HepG2 (cell line): ENCODE measurements at regions of chrX and their contacts with region 1.

Region 1: GRCh38 chrX:19334945-19335626 is 8.6 kb upstream of the PDHA1 start:
- DNase-seq: peak; percentile 75
- ATAC-seq: peak; percentile 66
- H3K4me3 ChIP-seq: no peak overlapping the region
- H3K27ac ChIP-seq: no peak overlapping the region
- H3K4me1 ChIP-seq: no peaks in the 10 kb centered on the region
- H3K27me3 ChIP-seq: no peaks in the 10 kb centered on the region; a peak in 1 of 5 replicates
- CTCF ChIP-seq: peak; percentile 60
- EP300 ChIP-seq: no peak
- POLR2A ChIP-seq: no peak
- RAD21 ChIP-seq: no peak; the same call in 1 of the 2 replicates

Region 2: DNA sequence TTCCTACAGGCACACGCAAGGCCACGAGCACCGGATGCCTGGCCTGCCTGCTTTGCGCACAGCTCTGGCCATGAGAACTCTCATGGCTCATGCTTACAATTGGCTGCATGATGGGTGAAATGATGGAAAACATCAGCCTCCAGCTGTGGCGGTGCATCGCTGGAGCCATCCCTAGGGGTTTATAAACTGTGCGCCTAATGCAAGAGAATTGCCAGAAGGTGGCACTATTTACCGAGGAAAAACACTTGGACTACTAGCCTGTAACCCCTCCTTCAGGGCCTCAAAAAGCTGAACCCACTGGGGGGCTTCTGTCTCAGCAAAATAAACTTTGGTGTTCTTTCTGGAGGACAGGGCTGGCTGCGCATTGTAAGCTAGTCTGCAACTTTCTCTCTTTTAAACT is 403.1 kb before region 1 on chrX:
- CTCF ChIA-PET with region 1: interaction called, 20 read pairs
- POLR2A ChIA-PET with region 1: no interaction called
- in situ Hi-C with region 1: loop called (anchors 25 kb)
- intact Hi-C with region 1: loop called (anchors 2 kb)
- DNase-seq: peak; percentile 2
- ATAC-seq: peak; percentile 50; the same call in 2 of the 3 replicates
- H3K4me3 ChIP-seq: no peak overlapping the region
- H3K27ac ChIP-seq: no peak overlapping the region
- H3K4me1 ChIP-seq: no peaks in the 10 kb centered on the region
- H3K27me3 ChIP-seq: no peaks in the 10 kb centered on the region
- CTCF ChIP-seq: no peak
- EP300 ChIP-seq: no peak
- POLR2A ChIP-seq: no peak
- RAD21 ChIP-seq: no peak

Region 3: GRCh38 chrX:19017271-19017670 is 317.8 kb before region 1 on chrX:
- CTCF ChIA-PET with region 1: interaction called, 39 read pairs
- POLR2A ChIA-PET with region 1: no interaction called
- in situ Hi-C with region 1: loop called (anchors 10 kb)
- intact Hi-C with region 1: loop called (anchors 1 kb)
- DNase-seq: peak; percentile 13
- ATAC-seq: peak; percentile 75
- H3K4me3 ChIP-seq: no peak overlapping the region
- H3K27ac ChIP-seq: no peak overlapping the region
- H3K4me1 ChIP-seq: no peaks in the 10 kb centered on the region
- H3K27me3 ChIP-seq: no peaks in the 10 kb centered on the region
- CTCF ChIP-seq: peak; percentile 66
- EP300 ChIP-seq: no peak
- POLR2A ChIP-seq: no peak
- RAD21 ChIP-seq: no peak

Region 4: DNA sequence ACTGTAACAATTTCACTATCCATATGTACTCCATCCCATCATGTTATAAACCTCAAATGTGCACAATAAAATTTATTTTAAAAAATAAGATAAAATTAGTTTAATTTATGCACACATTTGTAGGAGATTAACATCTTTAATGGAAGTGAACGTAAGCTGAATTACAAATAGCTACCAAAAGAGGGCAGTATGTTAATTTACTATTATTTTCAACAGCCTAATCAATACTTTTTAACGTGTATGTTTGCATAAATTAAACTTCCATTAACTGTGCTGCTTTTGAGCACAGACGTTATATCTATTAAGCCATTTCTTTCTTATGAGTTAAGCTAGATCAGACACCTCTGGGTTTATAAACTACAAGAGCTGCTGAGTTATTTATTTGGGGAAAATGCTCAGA is 294.7 kb before region 1 on chrX:
- CTCF ChIA-PET with region 1: interaction called, 20 read pairs
- POLR2A ChIA-PET with region 1: no interaction called
- in situ Hi-C with region 1: no loop called
- intact Hi-C with region 1: loop called (anchors 1 kb)
- DNase-seq: no peak
- ATAC-seq: no peak
- H3K4me3 ChIP-seq: no peak overlapping the region
- H3K27ac ChIP-seq: no peak overlapping the region
- H3K4me1 ChIP-seq: no peaks in the 10 kb centered on the region
- H3K27me3 ChIP-seq: no peaks in the 10 kb centered on the region
- CTCF ChIP-seq: 0 out of 2 replicates have a peak, but pooled peaks have one; percentile 22
- EP300 ChIP-seq: no peak
- POLR2A ChIP-seq: no peak
- RAD21 ChIP-seq: no peak

Region 5: DNA sequence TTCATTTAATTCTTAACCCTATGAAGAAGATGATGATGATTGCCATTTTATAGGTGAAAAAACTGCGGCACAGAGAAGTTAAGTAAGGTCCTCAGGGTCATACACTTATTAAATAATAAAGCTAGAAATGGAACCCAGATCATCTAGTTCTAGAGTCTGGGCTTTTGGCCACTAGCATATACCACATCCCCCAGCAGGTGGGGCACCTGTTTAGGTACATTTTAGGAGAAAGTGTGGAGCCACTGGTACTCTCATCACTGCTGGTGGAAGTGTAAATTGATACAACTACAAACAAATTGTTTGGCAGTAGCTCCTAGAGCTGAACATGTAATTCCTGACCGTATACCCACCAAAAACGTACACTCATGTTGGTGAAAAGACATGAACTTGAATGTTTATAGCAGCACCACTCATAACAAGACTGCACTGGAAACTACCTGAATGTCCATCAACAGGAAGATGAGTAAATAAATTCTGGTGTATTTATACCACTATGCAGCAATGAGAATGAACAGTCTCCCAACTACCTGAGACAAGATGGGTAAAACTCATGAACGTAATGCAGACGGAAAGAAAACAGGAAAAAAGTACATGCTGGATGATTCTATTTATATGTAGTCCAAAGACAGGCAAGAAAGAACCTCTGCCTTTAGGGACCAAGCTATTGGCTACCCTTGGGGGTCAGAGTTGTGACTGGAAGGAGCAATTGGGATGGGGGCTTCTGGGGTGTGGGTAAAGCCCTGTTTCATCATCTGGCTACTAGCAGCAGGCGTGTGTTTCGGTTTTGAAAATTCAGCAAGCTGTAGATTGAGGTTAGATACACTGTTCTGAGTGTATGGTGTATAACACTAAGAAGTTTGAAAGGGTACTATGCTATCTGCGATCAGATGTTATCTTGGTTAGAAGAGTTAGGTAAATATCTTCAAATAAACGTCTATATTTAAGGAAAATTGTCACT is 140.5 kb before region 1 on chrX:
- CTCF ChIA-PET with region 1: no interaction called
- POLR2A ChIA-PET with region 1: no interaction called
- in situ Hi-C with region 1: no loop called
- intact Hi-C with region 1: loop called (anchors 1 kb)
- DNase-seq: no peak
- ATAC-seq: no peak
- H3K4me3 ChIP-seq: no peak overlapping the region
- H3K27ac ChIP-seq: no peak overlapping the region
- H3K4me1 ChIP-seq: no peaks in the 10 kb centered on the region
- H3K27me3 ChIP-seq: peaks cover 0 to 6% of the 10 kb centered on the region in 2 experiments; a peak in 2 of 5 replicates
- CTCF ChIP-seq: no peak
- EP300 ChIP-seq: no peak
- POLR2A ChIP-seq: no peak
- RAD21 ChIP-seq: no peak

Region 6: GRCh38 chrX:19280636-19281035 is 54.5 kb before region 1 on chrX:
- CTCF ChIA-PET with region 1: no interaction called
- POLR2A ChIA-PET with region 1: no interaction called
- in situ Hi-C with region 1: no loop called
- intact Hi-C with region 1: no loop called
- DNase-seq: no peak
- ATAC-seq: no peak
- H3K4me3 ChIP-seq: no peak overlapping the region
- H3K27ac ChIP-seq: no peak overlapping the region
- H3K4me1 ChIP-seq: no peaks in the 10 kb centered on the region
- H3K27me3 ChIP-seq: no peaks in the 10 kb centered on the region
- CTCF ChIP-seq: no peak
- EP300 ChIP-seq: no peak
- POLR2A ChIP-seq: no peak
- RAD21 ChIP-seq: no peak

Region 7: GRCh38 chrX:19358526-19358925 is 23.4 kb after region 1 on chrX:
- CTCF ChIA-PET with region 1: no interaction called
- POLR2A ChIA-PET with region 1: no interaction called
- in situ Hi-C with region 1: no loop called
- intact Hi-C with region 1: no loop called
- DNase-seq: no peak
- ATAC-seq: no peak
- H3K4me3 ChIP-seq: no peak overlapping the region
- H3K27ac ChIP-seq: no peak overlapping the region
- H3K4me1 ChIP-seq: no peaks in the 10 kb centered on the region
- H3K27me3 ChIP-seq: no peaks in the 10 kb centered on the region
- CTCF ChIP-seq: no peak
- EP300 ChIP-seq: no peak
- POLR2A ChIP-seq: no peak
- RAD21 ChIP-seq: no peak

Region 8: DNA sequence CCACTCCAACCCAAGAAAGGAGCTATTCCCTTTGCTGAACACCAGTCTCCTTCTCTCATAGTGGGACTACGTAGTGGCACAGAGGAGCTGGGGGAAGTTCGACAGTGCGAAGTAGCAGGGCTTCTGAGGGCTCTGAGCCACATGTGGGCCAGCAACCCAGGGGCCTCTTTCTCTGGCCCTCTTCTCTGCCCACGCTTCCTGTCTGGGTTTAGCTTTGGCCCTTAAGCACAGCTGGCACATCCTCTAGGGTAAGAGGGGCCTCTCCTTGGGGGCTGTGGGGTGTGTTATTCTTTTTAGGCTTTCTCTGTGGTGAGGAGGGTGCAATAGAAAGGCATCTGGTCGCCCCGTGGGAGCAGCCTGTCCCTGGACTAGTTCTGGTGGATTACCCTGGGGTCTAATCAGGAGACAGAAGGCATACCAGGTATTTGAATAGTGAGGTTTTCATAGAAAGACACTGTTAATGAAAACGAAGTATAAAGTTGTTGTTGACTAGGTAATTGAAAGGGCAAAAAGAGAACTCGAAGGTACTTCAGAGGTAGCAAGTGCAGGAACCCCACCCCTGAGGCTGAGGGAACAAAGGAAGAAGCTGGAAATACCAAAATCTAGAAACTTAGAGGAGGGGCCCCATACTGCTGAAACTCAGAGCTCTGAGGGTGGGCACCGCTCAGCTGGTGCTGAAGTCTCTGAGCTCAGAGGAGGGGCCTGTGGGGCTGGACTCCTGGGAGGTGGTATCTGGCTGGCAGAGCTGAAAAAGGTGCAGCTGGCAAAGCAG is 1083.5 kb after region 1 on chrX:
- CTCF ChIA-PET with region 1: no interaction called
- POLR2A ChIA-PET with region 1: no interaction called
- in situ Hi-C with region 1: no loop called
- intact Hi-C with region 1: no loop called
- DNase-seq: no peak
- ATAC-seq: no peak
- H3K4me3 ChIP-seq: no peak overlapping the region
- H3K27ac ChIP-seq: no peak overlapping the region
- H3K4me1 ChIP-seq: peaks cover 8% of the 10 kb centered on the region
- H3K27me3 ChIP-seq: no peaks in the 10 kb centered on the region
- CTCF ChIP-seq: no peak
- EP300 ChIP-seq: no peak
- POLR2A ChIP-seq: no peak
- RAD21 ChIP-seq: no peak